ENCODE measurements at regions of chr3 and their contacts with region 1.

Region 1: GRCh38 chr3:106428565-106428994 is 559.8 kb upstream of the CBLB start:
- DNase-seq: peak; percentile 72
- H3K4me3 Mint-ChIP-seq: no peak overlapping the region
- H3K27ac Mint-ChIP-seq: peak overlapping the region; percentile 99
- H3K4me1 Mint-ChIP-seq: peaks cover 53% of the 10 kb centered on the region
- H3K27me3 Mint-ChIP-seq: no peaks in the 10 kb centered on the region

Region 2: DNA sequence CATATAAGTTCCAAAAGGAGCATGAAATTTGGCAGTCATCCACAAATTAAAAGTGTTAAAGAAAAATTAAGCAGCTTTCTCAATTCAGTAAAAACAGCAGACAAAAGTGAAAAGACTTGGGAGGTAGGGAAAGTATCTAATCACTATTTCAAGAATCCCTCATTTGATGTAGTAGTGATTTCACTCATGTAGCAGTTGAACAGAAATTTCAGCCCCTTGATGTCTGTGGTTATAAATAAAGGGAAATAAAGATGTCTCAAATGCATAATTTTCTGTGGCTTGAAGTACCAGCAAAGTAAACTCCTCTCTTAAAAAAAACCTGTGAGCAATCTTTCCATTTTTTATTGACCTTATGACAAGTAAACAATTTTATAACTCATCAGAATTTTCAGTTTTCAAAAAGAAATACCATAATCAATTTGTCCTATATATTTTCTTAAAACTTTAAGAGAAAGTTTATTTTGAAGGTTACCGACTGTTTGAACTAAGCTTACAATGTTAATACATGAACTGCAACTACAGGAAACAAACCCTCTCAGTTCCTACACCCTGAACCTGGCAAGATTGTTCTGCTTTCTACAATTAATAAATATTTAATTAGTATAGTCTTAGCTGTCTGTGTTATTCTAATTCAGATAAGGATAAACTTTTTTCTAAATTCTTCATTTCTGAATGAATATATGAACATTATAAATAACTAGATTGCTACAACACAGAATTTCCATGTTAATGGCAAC is 654.0 kb before region 1 on chr3:
- CTCF ChIA-PET with region 1: no interaction called
- POLR2A ChIA-PET with region 1: no interaction called
- intact Hi-C with region 1: loop called (anchors 10 kb)
- DNase-seq: no peak
- H3K4me3 Mint-ChIP-seq: no peak overlapping the region
- H3K27ac Mint-ChIP-seq: peak overlapping the region; percentile 49
- H3K4me1 Mint-ChIP-seq: peaks cover 71% of the 10 kb centered on the region
- H3K27me3 Mint-ChIP-seq: no peaks in the 10 kb centered on the region

Region 3: DNA sequence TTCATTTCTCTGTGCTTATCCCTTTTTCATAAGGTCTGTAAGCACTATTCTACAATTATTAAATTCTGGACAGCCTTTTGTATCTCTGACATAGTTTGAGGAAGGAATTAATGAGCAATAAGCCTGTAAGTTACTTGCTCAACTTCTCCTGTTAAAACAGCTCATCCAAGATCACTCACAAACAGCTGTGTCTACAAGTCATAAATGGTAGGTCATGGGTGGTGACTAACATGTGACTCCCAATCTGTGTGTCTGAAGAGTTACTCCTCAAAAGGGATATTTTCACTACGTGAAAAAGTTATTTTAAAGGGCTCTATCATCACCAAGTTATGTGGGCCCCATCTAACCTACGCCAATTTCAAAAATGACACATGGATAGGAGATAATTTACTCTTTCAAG is 414.6 kb before region 1 on chr3:
- CTCF ChIA-PET with region 1: no interaction called
- POLR2A ChIA-PET with region 1: no interaction called
- intact Hi-C with region 1: loop called (anchors 2 kb)
- DNase-seq: no peak
- H3K4me3 Mint-ChIP-seq: no peak overlapping the region
- H3K27ac Mint-ChIP-seq: peak overlapping the region; percentile 30
- H3K4me1 Mint-ChIP-seq: peaks cover 41% of the 10 kb centered on the region
- H3K27me3 Mint-ChIP-seq: no peaks in the 10 kb centered on the region

Region 4: GRCh38 chr3:106457286-106458180 is 29.0 kb after region 1 on chr3:
- CTCF ChIA-PET with region 1: interaction called, 3 read pairs
- POLR2A ChIA-PET with region 1: interaction called, 3 read pairs
- intact Hi-C with region 1: loop called (anchors 2 kb)
- DNase-seq: peak; percentile 56
- H3K4me3 Mint-ChIP-seq: no peak overlapping the region
- H3K27ac Mint-ChIP-seq: peak overlapping the region; percentile 36
- H3K4me1 Mint-ChIP-seq: peaks cover 17% of the 10 kb centered on the region
- H3K27me3 Mint-ChIP-seq: no peaks in the 10 kb centered on the region

Region 5: GRCh38 chr3:106589311-106589942 is 160.8 kb after region 1 on chr3:
- CTCF ChIA-PET with region 1: no interaction called
- POLR2A ChIA-PET with region 1: no interaction called
- intact Hi-C with region 1: loop called (anchors 1 kb)
- DNase-seq: peak; percentile 29
- H3K4me3 Mint-ChIP-seq: no peak overlapping the region
- H3K27ac Mint-ChIP-seq: no peak overlapping the region
- H3K4me1 Mint-ChIP-seq: peaks cover 15% of the 10 kb centered on the region
- H3K27me3 Mint-ChIP-seq: no peaks in the 10 kb centered on the region